ENCODE measurements at regions of chr1 and their contacts with region 1.

Region 1: GRCh38 chr1:241311056-241311746 is 45.8 kb downstream of the RGS7 start:
- DNase-seq: peak; percentile 79
- H3K4me3 Mint-ChIP-seq: peak overlapping the region; percentile 0
- H3K27ac Mint-ChIP-seq: peak overlapping the region; percentile 37
- H3K4me1 Mint-ChIP-seq: peaks cover 15% of the 10 kb centered on the region
- H3K27me3 Mint-ChIP-seq: no peaks in the 10 kb centered on the region
- CTCF ChIP-seq: peak; percentile 62

Region 2: GRCh38 chr1:241408170-241408569 is 97.0 kb after region 1 on chr1:
- CTCF ChIA-PET with region 1: no interaction called
- POLR2A ChIA-PET with region 1: no interaction called
- intact Hi-C with region 1: loop called (anchors 5 kb)
- DNase-seq: peak; percentile 51
- H3K4me3 Mint-ChIP-seq: no peak overlapping the region
- H3K27ac Mint-ChIP-seq: no peak overlapping the region
- H3K4me1 Mint-ChIP-seq: peaks cover 8% of the 10 kb centered on the region
- H3K27me3 Mint-ChIP-seq: peaks cover 13% of the 10 kb centered on the region
- CTCF ChIP-seq: peak; percentile 17

Region 3: DNA sequence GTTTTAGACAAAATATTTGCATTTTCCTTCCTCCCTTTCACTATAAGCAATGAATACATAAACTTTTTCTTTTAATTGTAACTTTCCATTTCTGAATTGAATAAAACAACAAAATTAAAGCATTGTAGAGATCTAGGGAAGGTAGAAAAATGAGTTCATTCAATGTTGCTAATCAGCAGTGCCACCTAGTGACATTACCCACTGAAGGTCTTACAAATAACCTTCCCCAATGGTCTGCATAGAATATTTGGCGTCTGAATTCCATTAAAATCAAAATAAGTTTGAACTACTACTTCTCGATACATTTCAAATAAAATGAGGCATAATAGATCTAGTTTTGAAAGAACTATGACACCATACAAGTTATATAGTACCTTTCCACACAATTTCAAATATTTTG is 188.7 kb after region 1 on chr1:
- CTCF ChIA-PET with region 1: interaction called, 3 read pairs
- POLR2A ChIA-PET with region 1: no interaction called
- intact Hi-C with region 1: loop called (anchors 1 kb)
- DNase-seq: peak; percentile 65
- H3K4me3 Mint-ChIP-seq: no peak overlapping the region
- H3K27ac Mint-ChIP-seq: no peak overlapping the region
- H3K4me1 Mint-ChIP-seq: no peaks in the 10 kb centered on the region
- H3K27me3 Mint-ChIP-seq: no peaks in the 10 kb centered on the region
- CTCF ChIP-seq: peak; percentile 84